GM12878 (cell line): ENCODE measurements at regions of chr1 and their contacts with region 1.

Region 1: DNA sequence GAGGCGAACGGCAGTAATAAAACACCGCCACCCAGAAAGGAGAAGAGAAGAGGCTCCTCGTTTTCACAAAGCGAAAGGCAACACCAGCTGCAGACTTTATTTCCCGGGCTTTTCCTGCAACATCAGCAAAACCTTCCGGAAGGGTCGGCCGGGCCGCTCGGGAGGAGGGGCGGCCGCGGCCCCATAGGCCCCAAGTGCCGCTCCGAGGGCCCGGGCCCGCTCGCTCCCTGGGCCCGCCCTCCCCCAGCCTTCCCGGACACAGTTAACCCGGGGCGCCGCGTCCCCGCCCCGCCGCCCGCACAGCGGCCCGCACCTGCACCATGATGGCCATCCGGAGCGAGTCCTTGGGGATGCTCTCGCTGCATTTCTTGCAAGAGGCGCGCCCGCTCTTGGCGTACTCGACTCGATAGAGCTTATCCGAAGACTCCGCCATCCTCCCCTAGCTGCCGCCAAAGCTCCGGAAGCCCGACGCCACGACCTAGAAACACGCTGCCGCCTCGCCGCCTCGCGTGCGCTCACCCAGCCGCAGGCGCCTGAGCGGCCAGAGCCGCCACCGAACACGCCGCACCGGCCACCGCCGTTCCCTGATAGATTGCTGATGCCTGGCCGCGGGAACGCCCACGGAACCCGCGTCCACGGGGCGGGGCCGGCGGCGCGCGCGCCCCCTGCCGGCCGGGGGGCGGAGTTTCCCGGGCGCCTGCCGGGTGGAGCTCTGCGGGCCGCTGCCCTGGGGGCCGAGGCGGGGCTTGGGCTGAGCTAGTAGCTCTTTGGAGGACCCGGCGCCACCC is at the start of gene PARP1:
- DNase-seq: no peak
- ATAC-seq: peak; percentile 85
- H3K4me3 ChIP-seq: peak within 1 kb of the TSS; percentile 86
- H3K27ac ChIP-seq: peak within 1 kb of the TSS; percentile 77
- H3K4me1 ChIP-seq: peaks cover 22% of the 10 kb centered on the region
- H3K27me3 ChIP-seq: no peaks in the 10 kb centered on the region
- CTCF ChIP-seq: peak; percentile 33 to 83 (median 71); a peak in 5 of 6 replicates
- EP300 ChIP-seq: no peak; a peak in 1 of 4 replicates
- POLR2A ChIP-seq: peak; percentile 86
- RAD21 ChIP-seq: no peak
- polyA plus RNA-seq, gene PARP1: 113 to 170 TPM

Region 2: GRCh38 chr1:226201029-226201593 is 206.6 kb before region 1 on chr1:
- CTCF ChIA-PET with region 1: interaction called, 13 read pairs
- POLR2A ChIA-PET with region 1: interaction called, 3 read pairs
- RAD21 ChIA-PET with region 1: interaction called, 16 read pairs
- SMC1A ChIA-PET with region 1: interaction called, 9 read pairs
- in situ Hi-C with region 1: no loop called
- intact Hi-C with region 1: no loop called
- DNase-seq: no peak
- ATAC-seq: peak; percentile 80
- H3K4me3 ChIP-seq: no peak overlapping the region
- H3K27ac ChIP-seq: no peak overlapping the region
- H3K4me1 ChIP-seq: peaks cover 3% of the 10 kb centered on the region; the same call in 1 of the 2 replicates
- H3K27me3 ChIP-seq: no peaks in the 10 kb centered on the region; a peak in 1 of 4 replicates
- CTCF ChIP-seq: peak; percentile 59 to 67 (median 60)
- EP300 ChIP-seq: no peak
- POLR2A ChIP-seq: no peak
- RAD21 ChIP-seq: peak; percentile 72

Region 3: DNA sequence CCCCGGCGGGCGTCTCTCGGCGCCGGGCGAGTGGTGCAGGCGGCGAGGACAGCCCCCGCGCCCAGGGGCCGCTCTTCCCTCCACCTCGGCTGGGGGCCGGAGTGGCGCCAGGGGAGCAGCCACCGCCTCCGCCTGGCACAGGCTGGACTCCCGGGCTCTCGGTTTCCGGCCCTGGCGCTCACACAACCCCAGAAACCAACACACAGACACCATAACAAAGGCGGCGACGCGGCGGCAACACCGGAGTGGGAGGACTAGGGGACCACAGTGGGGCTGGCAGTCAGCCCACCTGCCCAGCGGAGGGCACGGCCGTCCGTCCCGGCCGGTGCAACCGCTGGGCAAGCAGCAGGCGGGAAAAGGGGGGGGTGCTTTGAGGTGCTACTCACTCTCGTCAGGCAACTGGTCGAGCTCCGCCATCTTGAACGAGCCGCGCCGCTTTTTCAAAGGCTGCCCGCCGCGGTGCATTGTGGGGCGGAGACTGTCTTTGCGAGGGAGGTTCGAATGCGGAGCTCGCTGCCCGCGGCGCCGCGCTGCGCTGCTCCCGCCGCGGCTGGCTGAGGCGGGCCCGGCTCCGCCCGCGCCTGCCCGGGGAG is 98.9 kb before region 1 on chr1 and contains the start of gene LIN9:
- CTCF ChIA-PET with region 1: interaction called, 4 read pairs
- POLR2A ChIA-PET with region 1: interaction called, 3 read pairs
- RAD21 ChIA-PET with region 1: interaction called, 11 read pairs
- SMC1A ChIA-PET with region 1: interaction called, 5 read pairs
- in situ Hi-C with region 1: no loop called
- intact Hi-C with region 1: no loop called
- DNase-seq: peak; percentile 46
- ATAC-seq: peak; percentile 84
- H3K4me3 ChIP-seq: peak within 1 kb of the TSS; percentile 98
- H3K27ac ChIP-seq: peak within 1 kb of the TSS; percentile 92
- H3K4me1 ChIP-seq: peaks cover 3% of the 10 kb centered on the region; the same call in 1 of the 2 replicates
- H3K27me3 ChIP-seq: no peaks in the 10 kb centered on the region
- CTCF ChIP-seq: no peak
- EP300 ChIP-seq: no peak
- POLR2A ChIP-seq: peak; percentile 92
- RAD21 ChIP-seq: no peak
- polyA plus RNA-seq, gene LIN9: 5.9 to 6.5 TPM

Region 4: DNA sequence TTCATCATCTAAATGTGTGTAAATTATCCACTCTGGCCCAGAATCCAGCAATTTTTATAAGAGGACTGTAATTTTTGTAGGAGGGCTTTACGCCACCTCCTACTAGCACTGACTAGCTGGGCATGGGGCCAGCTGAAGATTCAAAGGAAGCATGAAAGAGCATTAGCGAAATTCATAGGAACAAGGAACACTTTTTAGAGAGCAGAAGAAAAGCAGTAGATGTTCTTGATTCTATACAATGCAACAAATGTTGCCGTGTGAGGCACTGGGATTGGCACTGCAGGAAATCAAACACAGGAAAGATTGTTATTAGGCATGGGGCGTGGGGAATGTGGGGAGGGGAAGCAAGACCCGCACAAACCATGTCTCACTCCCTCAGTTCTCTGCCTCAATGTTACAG is 58.6 kb after region 1 on chr1:
- CTCF ChIA-PET with region 1: no interaction called
- POLR2A ChIA-PET with region 1: no interaction called
- RAD21 ChIA-PET with region 1: no interaction called
- SMC1A ChIA-PET with region 1: no interaction called
- in situ Hi-C with region 1: no loop called
- intact Hi-C with region 1: loop called (anchors 5 kb)
- DNase-seq: no peak
- ATAC-seq: no peak
- H3K4me3 ChIP-seq: no peak overlapping the region
- H3K27ac ChIP-seq: no peak overlapping the region
- H3K4me1 ChIP-seq: no peaks in the 10 kb centered on the region
- H3K27me3 ChIP-seq: no peaks in the 10 kb centered on the region; a peak in 1 of 4 replicates
- CTCF ChIP-seq: no peak
- EP300 ChIP-seq: no peak
- POLR2A ChIP-seq: no peak
- RAD21 ChIP-seq: no peak